Prostate gland (tissue), 2 donors: ENCODE measurements at regions of chr1 and their contacts with region 1.

Region 1: GRCh38 chr1:228109073-228109961 is at the start of gene MRPL55:
- DNase-seq: peak; percentile 98
- H3K4me3 ChIP-seq: peak within 1 kb of the TSS; percentile 83 to 96
- H3K27ac ChIP-seq: peak within 1 kb of the TSS; percentile 92 to 93
- H3K4me1 ChIP-seq: peaks cover 3% of the 10 kb centered on the region
- H3K27me3 ChIP-seq: no peaks in the 10 kb centered on the region
- CTCF ChIP-seq: peak in 3 of 4 experiments; percentile 16 to 42 (median 39)
- POLR2A ChIP-seq: peak; percentile 95
- total RNA-seq, gene MRPL55: 120 to 136 TPM

Region 2: GRCh38 chr1:228031276-228031995 is 77.9 kb before region 1 on chr1:
- intact Hi-C with region 1: no loop called
- DNase-seq: no peak
- H3K4me3 ChIP-seq: no peak overlapping the region
- H3K27ac ChIP-seq: no peak overlapping the region
- H3K4me1 ChIP-seq: no peaks in the 10 kb centered on the region
- H3K27me3 ChIP-seq: no peaks in the 10 kb centered on the region
- CTCF ChIP-seq: no peak
- POLR2A ChIP-seq: no peak

Region 3: GRCh38 chr1:228082135-228082891 is 27.0 kb before region 1 on chr1 and contains the start of gene ARF1:
- intact Hi-C with region 1: loop called (anchors 2 kb)
- DNase-seq: peak; percentile 92
- H3K4me3 ChIP-seq: peak within 1 kb of the TSS; percentile 95 to 100
- H3K27ac ChIP-seq: peak within 1 kb of the TSS; percentile 98 to 100
- H3K4me1 ChIP-seq: peaks cover 31% of the 10 kb centered on the region
- H3K27me3 ChIP-seq: no peaks in the 10 kb centered on the region
- CTCF ChIP-seq: peak in 3 of 4 experiments; percentile 30 to 66 (median 57)
- POLR2A ChIP-seq: peak; percentile 91
- total RNA-seq, gene ARF1: 478 to 512 TPM

Region 4: GRCh38 chr1:228149341-228150119 is 40.2 kb after region 1 on chr1 and contains the start of gene GJC2:
- intact Hi-C with region 1: loop called (anchors 5 kb)
- DNase-seq: no peak
- H3K4me3 ChIP-seq: peak within 1 kb of the TSS; percentile 14 to 17
- H3K27ac ChIP-seq: peak within 1 kb of the TSS; percentile 78 to 79
- H3K4me1 ChIP-seq: no peaks in the 10 kb centered on the region
- H3K27me3 ChIP-seq: no peaks in the 10 kb centered on the region
- CTCF ChIP-seq: no peak
- POLR2A ChIP-seq: peak; percentile 42
- total RNA-seq, gene GJC2: 1.9 to 4.1 TPM